Sciatic nerve (tissue), 2 donors: ENCODE measurements at regions of chr2 and their contacts with region 1.

Region 1: GRCh38 chr2:74482801-74483674 is at the starts of genes CCDC142 and TTC31:
- DNase-seq: peak; percentile 97
- ATAC-seq: peak; percentile 99
- total RNA-seq, gene CCDC142: 25.0 TPM
- total RNA-seq, gene TTC31: 22.6 TPM

Region 2: DNA sequence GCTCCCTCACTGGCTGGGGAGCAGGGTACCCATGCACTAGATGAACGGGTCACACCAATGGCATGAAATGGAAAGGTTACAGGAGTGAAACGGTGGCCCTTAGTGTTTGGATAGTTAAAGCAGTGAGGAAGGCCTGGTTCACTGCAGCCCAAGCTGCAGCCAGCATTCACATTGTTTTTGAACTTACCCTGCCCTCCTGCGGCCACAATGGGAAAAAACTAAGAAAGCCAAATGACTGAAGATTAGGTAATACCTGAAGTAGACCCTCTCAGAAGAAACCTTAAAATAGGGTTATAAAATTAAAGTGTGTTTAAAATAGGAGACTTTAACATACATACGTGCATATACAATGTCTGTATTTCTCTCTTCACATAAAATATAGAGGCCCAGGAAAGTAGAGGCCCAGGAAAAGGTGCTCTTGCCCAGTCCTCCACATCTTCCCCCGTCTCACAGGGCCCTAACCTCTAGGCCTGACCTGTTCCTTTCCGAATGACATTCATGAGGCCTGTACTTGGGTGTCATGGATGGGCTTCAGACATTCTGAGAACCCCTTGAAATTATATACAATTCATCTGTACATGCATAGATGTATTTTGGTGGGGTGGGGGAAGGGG is 104.7 kb after region 1 on chr2:
- intact Hi-C with region 1: loop called (anchors 5 kb)
- DNase-seq: peak; percentile 70
- ATAC-seq: peak; percentile 91

Region 3: GRCh38 chr2:75090770-75091515 is 607.9 kb after region 1 on chr2:
- intact Hi-C with region 1: no loop called
- DNase-seq: no peak
- ATAC-seq: no peak